ENCODE measurements at regions of chr9 and their contacts with region 1.

Region 1: GRCh38 chr9:69759421-69760277 is at the start of gene PTAR1:
- DNase-seq: peak; percentile 79 to 95 (median 88)
- ATAC-seq: peak; percentile 81
- H3K4me3 ChIP-seq: peak within 1 kb of the TSS; percentile 64 to 85
- H3K4me3 Mint-ChIP-seq: peak within 1 kb of the TSS; percentile 96
- H3K27ac ChIP-seq: peak within 1 kb of the TSS; percentile 84 to 87
- H3K27ac Mint-ChIP-seq: peak within 1 kb of the TSS; percentile 93
- H3K4me1 ChIP-seq: peaks cover 23% of the 10 kb centered on the region
- H3K4me1 Mint-ChIP-seq: peaks cover 40% of the 10 kb centered on the region
- H3K27me3 ChIP-seq: no peaks in the 10 kb centered on the region
- H3K27me3 Mint-ChIP-seq: no peaks in the 10 kb centered on the region
- CTCF ChIP-seq: no peak
- total RNA-seq, gene PTAR1: 57.6 to 59.8 TPM

Region 2: DNA sequence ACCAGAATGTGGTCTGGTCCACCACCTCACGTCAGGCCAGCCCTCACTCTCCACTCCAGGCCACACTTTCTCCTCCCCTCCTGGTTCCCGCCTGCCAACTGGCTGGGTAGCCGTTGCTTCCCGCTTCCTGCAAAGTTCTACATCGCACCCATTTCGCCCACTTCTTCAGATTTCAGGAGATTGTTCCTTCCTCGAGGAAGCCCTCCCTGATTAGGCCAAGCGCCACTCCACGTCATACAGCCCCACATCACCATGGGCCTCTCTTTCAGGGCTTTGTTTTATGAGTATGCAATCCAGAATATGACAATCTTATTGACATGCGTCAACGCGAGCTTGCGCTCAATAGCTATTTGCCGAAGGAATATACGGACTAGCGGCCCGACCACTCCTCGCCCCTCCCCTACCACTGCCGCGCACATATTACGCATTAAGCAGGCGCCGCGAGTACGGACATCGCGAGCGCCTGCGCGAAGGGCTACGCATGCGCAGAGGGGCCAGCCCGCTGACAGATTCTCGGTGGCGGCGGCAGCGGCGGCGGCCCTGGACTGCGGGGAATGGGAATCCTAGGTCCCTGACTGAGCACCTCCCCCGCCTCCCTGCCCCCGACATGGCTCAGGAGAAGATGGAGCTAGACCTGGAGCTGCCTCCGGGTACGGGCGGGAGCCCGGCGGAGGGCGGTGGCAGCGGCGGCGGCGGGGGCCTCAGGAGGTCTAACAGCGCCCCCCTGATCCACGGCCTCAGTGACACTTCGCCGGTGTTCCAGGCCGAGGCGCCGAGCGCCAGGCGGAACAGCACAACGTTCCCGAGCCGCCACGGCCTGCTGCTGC is 979.9 kb before region 1 on chr9:
- CTCF ChIA-PET with region 1: no interaction called
- POLR2A ChIA-PET with region 1: no interaction called
- intact Hi-C with region 1: loop called in 1 of 2 experiments (anchors 5 kb)
- DNase-seq: peak; percentile 87 to 97 (median 94)
- ATAC-seq: peak; percentile 92
- H3K4me3 ChIP-seq: peak overlapping the region; percentile 67 to 80
- H3K4me3 Mint-ChIP-seq: no peak overlapping the region
- H3K27ac ChIP-seq: peak overlapping the region; percentile 91 to 92
- H3K27ac Mint-ChIP-seq: no peak overlapping the region
- H3K4me1 ChIP-seq: peaks cover 49% of the 10 kb centered on the region
- H3K4me1 Mint-ChIP-seq: peaks cover 8% of the 10 kb centered on the region
- H3K27me3 ChIP-seq: no peaks in the 10 kb centered on the region
- H3K27me3 Mint-ChIP-seq: peaks cover 4% of the 10 kb centered on the region
- CTCF ChIP-seq: peak; percentile 53

Region 3: GRCh38 chr9:69035438-69036308 is 724.0 kb before region 1 on chr9 and contains the start of gene FXN:
- CTCF ChIA-PET with region 1: no interaction called
- POLR2A ChIA-PET with region 1: interaction called, 3 read pairs
- intact Hi-C with region 1: loop called (anchors 5 kb)
- DNase-seq: peak; percentile 64 to 90 (median 80)
- ATAC-seq: peak; percentile 87
- H3K4me3 ChIP-seq: peak within 1 kb of the TSS; percentile 51 to 81
- H3K4me3 Mint-ChIP-seq: peak within 1 kb of the TSS; percentile 97
- H3K27ac ChIP-seq: peak within 1 kb of the TSS; percentile 35 to 67
- H3K27ac Mint-ChIP-seq: peak within 1 kb of the TSS; percentile 92
- H3K4me1 ChIP-seq: peaks cover 14% of the 10 kb centered on the region
- H3K4me1 Mint-ChIP-seq: peaks cover 28% of the 10 kb centered on the region
- H3K27me3 ChIP-seq: no peaks in the 10 kb centered on the region
- H3K27me3 Mint-ChIP-seq: no peaks in the 10 kb centered on the region
- CTCF ChIP-seq: peak; percentile 96
- total RNA-seq, gene FXN: 9.7 to 13.1 TPM

Region 4: GRCh38 chr9:69672596-69673310 is 86.9 kb before region 1 on chr9:
- CTCF ChIA-PET with region 1: interaction called, 3 read pairs
- POLR2A ChIA-PET with region 1: no interaction called
- intact Hi-C with region 1: loop called (anchors 1 to 2 kb)
- DNase-seq: peak; percentile 27 to 76 (median 69)
- ATAC-seq: peak; percentile 81
- H3K4me3 ChIP-seq: peak overlapping the region; percentile 58 to 73
- H3K4me3 Mint-ChIP-seq: peak overlapping the region; percentile 81
- H3K27ac ChIP-seq: no peak overlapping the region
- H3K27ac Mint-ChIP-seq: no peak overlapping the region
- H3K4me1 ChIP-seq: peaks cover 5% of the 10 kb centered on the region
- H3K4me1 Mint-ChIP-seq: peaks cover 18% of the 10 kb centered on the region
- H3K27me3 ChIP-seq: peaks cover 0 to 3% of the 10 kb centered on the region in 2 experiments
- H3K27me3 Mint-ChIP-seq: peaks cover 19% of the 10 kb centered on the region
- CTCF ChIP-seq: peak; percentile 76

Region 5: DNA sequence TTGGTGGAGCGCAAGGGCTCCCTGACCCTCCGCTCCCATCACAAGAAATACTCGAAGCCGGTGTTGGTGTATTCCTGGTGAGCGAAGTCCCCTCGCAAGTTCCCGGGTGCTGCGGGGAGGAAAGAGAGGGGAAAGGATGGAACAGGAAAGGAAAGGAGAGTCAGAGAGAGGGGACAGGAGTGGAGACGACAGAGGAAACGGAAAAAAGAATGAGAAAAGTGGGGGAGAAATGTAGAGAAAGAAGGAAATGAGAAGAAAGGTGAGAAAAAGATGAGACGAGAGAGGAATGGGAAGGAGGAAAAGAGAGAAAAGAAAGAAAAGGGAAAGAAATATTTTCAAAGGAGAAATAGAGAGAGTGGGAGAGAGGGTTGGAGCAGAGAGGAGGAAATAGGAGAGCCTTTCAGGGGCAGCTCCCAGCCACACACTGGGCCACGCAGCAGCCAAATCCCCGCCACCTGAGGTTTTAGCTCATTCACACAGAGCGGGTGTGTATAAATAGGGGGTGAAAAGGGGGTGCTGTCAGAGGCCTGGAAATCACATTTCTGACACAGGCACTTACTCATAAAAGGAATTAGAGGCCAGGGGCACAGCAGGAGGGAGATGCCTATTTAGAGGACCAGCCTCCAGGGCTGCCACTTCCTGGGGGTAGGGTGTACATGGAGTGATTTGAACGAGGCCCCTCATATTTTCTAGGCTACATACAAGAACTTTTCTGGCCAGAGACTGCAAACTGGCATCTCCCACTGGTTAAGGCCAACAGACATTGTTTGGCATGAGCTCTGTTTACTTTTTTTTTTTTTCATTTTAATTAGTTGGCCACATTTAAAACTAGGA is 61.5 kb after region 1 on chr9:
- CTCF ChIA-PET with region 1: no interaction called
- POLR2A ChIA-PET with region 1: no interaction called
- intact Hi-C with region 1: loop called in 1 of 2 experiments (anchors 1 kb)
- DNase-seq: no peak
- ATAC-seq: no peak
- H3K4me3 ChIP-seq: peak overlapping the region; percentile 28 to 52
- H3K4me3 Mint-ChIP-seq: peak overlapping the region; percentile 75
- H3K27ac ChIP-seq: peak overlapping the region in 1 of 2 experiments; percentile 20
- H3K27ac Mint-ChIP-seq: no peak overlapping the region
- H3K4me1 ChIP-seq: peaks cover 3% of the 10 kb centered on the region
- H3K4me1 Mint-ChIP-seq: peaks cover 10% of the 10 kb centered on the region
- H3K27me3 ChIP-seq: no peaks in the 10 kb centered on the region
- H3K27me3 Mint-ChIP-seq: peaks cover 14% of the 10 kb centered on the region
- CTCF ChIP-seq: no peak

Region 6: DNA sequence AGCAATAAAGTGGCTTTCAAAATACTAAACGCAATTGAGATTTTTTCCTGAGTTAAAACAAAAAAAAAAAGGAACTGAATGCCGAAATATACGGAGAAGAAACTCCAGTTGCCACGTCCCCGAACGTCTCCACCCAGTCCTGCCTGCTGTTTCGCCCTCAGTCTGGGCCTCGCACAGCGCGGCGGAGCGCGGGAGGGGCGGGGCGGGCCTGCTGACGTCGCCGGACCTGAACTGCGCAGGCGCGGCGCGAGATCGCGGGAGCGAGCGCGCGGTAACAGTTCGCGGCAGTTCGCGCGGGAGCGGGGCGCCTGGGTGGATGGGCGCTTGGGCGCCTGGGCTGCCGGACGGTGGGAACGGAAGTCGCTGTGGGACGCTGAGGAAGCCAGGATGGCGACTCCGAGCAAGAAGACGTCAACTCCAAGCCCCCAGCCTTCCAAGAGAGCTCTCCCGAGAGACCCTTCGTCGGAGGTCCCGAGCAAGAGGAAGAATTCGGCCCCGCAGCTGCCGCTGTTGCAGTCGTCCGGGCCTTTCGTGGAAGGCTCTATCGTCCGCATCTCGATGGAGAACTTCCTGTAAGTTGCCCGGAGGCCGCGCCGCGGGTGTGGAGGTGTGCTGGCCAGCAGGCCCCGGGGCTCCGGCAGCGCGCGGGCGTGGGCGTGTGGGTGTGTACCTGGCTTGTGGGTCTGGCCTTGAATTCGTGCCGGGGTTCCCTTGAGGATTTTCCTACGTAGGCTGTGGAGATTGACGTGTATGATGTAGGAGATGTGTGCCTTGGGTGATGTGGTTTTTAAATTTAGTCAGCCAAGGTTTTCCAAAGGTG is 499.3 kb after region 1 on chr9 and contains the start of gene SMC5:
- CTCF ChIA-PET with region 1: no interaction called
- POLR2A ChIA-PET with region 1: no interaction called
- intact Hi-C with region 1: loop called (anchors 1 kb)
- DNase-seq: peak; percentile 76 to 95 (median 87)
- ATAC-seq: peak; percentile 87
- H3K4me3 ChIP-seq: peak within 1 kb of the TSS; percentile 89 to 97
- H3K4me3 Mint-ChIP-seq: peak within 1 kb of the TSS; percentile 95
- H3K27ac ChIP-seq: peak within 1 kb of the TSS; percentile 85 to 94
- H3K27ac Mint-ChIP-seq: peak within 1 kb of the TSS; percentile 96
- H3K4me1 ChIP-seq: peaks cover 54% of the 10 kb centered on the region
- H3K4me1 Mint-ChIP-seq: peaks cover 66% of the 10 kb centered on the region
- H3K27me3 ChIP-seq: no peaks in the 10 kb centered on the region
- H3K27me3 Mint-ChIP-seq: no peaks in the 10 kb centered on the region
- CTCF ChIP-seq: no peak
- total RNA-seq, gene SMC5: 28.6 to 32.0 TPM

Region 7: GRCh38 chr9:70398145-70398556 is 638.5 kb after region 1 on chr9:
- CTCF ChIA-PET with region 1: no interaction called
- POLR2A ChIA-PET with region 1: no interaction called
- intact Hi-C with region 1: loop called in 1 of 2 experiments (anchors 5 kb)
- DNase-seq: peak in 2 of 9 experiments; percentile 67 to 84
- ATAC-seq: peak; percentile 87
- H3K4me3 ChIP-seq: peak overlapping the region in 1 of 2 experiments; percentile 25
- H3K4me3 Mint-ChIP-seq: peak overlapping the region; percentile 52
- H3K27ac ChIP-seq: peak overlapping the region; percentile 10 to 77
- H3K27ac Mint-ChIP-seq: peak overlapping the region; percentile 82
- H3K4me1 ChIP-seq: peaks cover 62% of the 10 kb centered on the region
- H3K4me1 Mint-ChIP-seq: peaks cover 77% of the 10 kb centered on the region
- H3K27me3 ChIP-seq: no peaks in the 10 kb centered on the region
- H3K27me3 Mint-ChIP-seq: no peaks in the 10 kb centered on the region
- CTCF ChIP-seq: no peak